Pancreas (tissue), 10 donors: ENCODE measurements at regions of chr20 and their contacts with region 1.

Region 1: DNA sequence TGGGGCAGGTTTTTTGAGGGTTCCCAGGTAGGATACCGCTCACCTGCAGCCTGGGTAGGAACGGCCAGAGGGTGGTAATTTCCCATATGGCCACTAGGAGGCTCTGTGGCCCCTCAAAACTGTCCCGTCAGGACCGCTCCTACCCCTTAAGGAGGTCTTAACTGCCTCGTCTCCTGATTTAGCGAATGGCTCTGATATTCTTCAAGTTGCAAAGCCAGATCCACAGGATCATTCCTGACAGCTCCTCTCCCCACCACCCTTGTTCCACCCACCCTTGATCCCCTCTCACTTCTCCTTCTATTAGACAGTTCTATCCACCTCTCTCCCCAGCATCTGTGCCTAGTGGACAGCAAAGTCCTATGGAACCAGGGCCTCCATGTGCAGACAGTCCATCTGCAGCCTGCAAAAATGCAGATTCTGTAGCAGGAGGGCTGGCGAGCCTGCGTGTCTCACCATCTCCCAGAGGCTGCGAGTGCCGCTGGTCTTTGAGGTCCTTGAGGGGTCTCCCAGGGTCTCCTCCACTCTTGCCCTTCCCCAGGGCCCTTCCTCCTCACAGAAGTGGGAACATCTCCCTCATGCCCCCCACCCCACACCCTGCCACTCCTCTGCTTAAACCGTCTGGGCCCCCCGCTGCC is 34.3 kb upstream of the ZBP1 start:
- DNase-seq: peak in 3 of 6 donors; percentile 25 to 64 (median 42)
- ATAC-seq: peak; percentile 65 to 80 (median 76)
- H3K4me3 ChIP-seq: no peak overlapping the region
- H3K27ac ChIP-seq: no peak overlapping the region
- H3K4me1 ChIP-seq: no peaks in the 10 kb centered on the region
- H3K27me3 ChIP-seq: no peaks in the 10 kb centered on the region
- CTCF ChIP-seq: peak; percentile 77 to 96 (median 84)

Region 2: DNA sequence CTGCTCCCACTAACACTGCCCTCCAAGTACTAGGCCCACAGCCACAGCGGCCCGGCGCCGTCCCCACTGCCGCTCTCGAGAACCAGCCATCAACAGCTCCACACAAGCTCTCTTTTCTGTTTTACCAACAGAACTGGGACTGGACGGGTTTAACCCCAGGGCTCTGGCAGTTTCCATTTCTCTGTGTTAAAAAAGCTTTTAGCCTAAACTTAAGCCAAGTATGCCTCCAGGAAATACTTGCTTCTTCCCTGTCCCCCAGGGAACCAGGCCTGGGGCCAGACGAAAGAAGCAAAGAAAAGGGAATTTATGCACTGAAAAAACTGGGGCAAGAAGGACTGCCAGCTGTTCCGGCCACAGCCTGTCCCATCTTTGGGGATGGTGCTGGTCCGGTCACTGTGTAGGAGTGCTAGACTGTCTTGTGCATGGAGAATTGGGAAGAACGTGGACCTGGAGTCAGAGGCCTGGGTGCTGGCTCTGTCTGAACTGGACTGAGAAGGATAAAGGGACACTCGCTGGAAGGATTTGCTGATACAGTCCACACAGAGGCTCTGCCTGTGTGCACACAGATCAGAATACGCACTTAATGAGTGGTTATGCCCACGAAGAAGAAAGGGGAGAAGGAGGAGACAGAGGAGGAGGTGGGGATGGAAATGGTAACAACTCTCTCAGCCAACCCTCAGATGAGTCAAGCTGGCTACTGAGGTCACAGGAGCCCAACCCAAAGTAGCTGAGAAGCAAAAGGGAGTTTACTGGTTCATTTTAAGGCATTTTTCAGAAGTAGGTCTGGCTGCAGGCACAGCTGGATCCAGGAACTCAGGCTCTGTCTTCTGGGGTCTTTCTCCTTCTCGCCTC is 309.8 kb after region 1 on chr20:
- intact Hi-C with region 1: loop called in 1 of 3 experiments (anchors 10 kb)
- DNase-seq: no peak
- ATAC-seq: peak in 1 of 4 donors; percentile 11
- H3K4me3 ChIP-seq: no peak overlapping the region
- H3K27ac ChIP-seq: peak overlapping the region in 1 of 4 donors; percentile 22
- H3K4me1 ChIP-seq: peaks cover 0 to 3% (median 0%) of the 10 kb centered on the region in 3 donors
- H3K27me3 ChIP-seq: no peaks in the 10 kb centered on the region
- CTCF ChIP-seq: no peak

Region 3: DNA sequence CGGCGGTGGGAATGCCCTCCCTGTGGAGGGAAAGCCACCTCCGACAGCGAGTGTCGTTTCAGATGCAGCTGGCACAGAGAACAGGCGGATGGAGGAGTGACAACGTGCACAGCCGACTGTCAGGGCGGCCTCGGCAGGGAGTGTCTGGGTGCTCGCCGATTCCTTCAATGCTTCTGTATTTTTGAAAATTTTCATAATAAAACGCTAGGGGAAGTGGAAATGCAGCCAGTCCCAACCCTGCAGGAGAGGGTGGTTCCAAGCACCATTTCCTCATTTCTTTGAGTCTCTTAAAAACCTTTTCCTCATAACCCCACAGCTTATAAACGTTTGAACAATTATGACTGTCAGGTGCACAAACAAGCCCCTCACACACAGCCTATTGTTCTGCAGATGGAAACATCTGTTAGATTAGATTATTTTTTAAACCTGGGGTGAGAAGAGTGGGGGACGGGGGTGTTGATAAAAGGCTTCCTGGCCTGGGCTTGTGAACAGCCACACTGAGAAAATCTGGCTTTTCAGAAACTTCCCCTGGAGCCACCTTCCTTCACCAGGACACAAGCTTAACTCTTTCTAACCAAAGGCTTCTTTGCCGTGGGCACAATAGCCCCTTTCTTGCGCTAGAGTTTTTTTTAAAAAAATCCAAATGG is 345.1 kb after region 1 on chr20:
- intact Hi-C with region 1: no loop called
- DNase-seq: peak in 2 of 6 donors; percentile 42
- ATAC-seq: peak; percentile 39 to 64 (median 60)
- H3K4me3 ChIP-seq: no peak overlapping the region
- H3K27ac ChIP-seq: peak overlapping the region; percentile 45 to 74 (median 62)
- H3K4me1 ChIP-seq: peaks cover 0 to 5% (median 4%) of the 10 kb centered on the region in 3 donors
- H3K27me3 ChIP-seq: no peaks in the 10 kb centered on the region
- CTCF ChIP-seq: no peak

Region 4: DNA sequence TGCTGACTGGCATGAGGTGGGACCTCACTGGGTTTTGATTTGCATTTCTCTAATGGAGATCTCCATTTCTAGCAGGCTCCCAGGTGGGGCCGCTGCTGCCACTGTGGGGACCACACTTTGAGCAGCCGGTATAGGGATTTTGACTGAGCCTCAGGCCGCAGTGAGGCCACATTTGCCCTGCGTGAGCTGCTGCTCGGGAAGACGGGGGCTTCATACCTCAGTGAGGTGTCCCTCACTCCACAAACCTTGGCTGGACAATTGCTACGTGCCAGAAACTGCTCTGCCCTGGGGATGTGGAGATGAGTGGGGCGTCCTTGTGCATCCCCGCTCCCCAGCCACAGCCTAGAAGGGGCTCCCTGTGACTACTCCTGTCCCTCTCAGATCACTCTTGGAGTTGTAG is 439.7 kb after region 1 on chr20:
- intact Hi-C with region 1: loop called in 1 of 3 experiments (anchors 10 kb)
- DNase-seq: no peak
- ATAC-seq: no peak
- H3K4me3 ChIP-seq: no peak overlapping the region
- H3K27ac ChIP-seq: no peak overlapping the region
- H3K4me1 ChIP-seq: no peaks in the 10 kb centered on the region
- H3K27me3 ChIP-seq: peaks cover 0 to 7% (median 0%) of the 10 kb centered on the region in 4 donors
- CTCF ChIP-seq: no peak

Region 5: GRCh38 chr20:58179432-58180099 is 525.1 kb after region 1 on chr20:
- intact Hi-C with region 1: loop called in 2 of 3 experiments (anchors 10 kb)
- DNase-seq: peak; percentile 20 to 90 (median 61)
- ATAC-seq: peak; percentile 88 to 96 (median 92)
- H3K4me3 ChIP-seq: peak overlapping the region in 1 of 4 donors; percentile 33
- H3K27ac ChIP-seq: no peak overlapping the region
- H3K4me1 ChIP-seq: peaks cover 0 to 8% (median 0%) of the 10 kb centered on the region in 3 donors
- H3K27me3 ChIP-seq: no peaks in the 10 kb centered on the region
- CTCF ChIP-seq: peak; percentile 98 to 99 (median 98)